ENCODE measurements at regions of chr6 and their contacts with region 1.

Region 1: DNA sequence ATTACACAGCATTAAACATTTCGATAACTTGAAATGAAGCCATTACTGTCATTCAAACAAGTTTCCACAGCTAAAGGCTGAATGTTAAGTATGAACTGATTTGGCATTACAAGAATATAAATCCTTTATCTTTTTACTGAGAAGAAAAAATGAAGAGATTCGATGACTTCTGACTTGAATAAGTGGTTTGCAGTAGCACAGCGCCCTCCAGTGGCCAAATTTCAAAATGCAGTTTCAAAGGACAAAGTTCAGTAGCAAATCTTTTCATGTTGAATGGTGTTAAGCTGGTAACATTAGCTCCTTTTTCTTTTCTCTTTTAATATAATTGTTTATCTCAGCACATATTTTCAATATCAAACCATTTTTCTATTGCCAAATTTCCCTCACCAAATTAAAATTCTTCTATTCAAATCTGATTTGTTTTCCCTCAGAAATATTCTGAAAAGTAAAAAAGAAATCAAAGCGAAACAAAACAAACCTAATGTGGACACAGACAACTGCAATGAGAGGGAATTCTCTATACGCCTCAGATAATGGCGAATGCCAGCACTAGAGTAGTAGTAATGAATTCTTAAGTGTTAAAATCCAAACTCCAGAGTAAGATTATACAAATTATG is 145.7 kb downstream of the BTBD9 start:
- DNase-seq: peak; percentile 81

Region 2: DNA sequence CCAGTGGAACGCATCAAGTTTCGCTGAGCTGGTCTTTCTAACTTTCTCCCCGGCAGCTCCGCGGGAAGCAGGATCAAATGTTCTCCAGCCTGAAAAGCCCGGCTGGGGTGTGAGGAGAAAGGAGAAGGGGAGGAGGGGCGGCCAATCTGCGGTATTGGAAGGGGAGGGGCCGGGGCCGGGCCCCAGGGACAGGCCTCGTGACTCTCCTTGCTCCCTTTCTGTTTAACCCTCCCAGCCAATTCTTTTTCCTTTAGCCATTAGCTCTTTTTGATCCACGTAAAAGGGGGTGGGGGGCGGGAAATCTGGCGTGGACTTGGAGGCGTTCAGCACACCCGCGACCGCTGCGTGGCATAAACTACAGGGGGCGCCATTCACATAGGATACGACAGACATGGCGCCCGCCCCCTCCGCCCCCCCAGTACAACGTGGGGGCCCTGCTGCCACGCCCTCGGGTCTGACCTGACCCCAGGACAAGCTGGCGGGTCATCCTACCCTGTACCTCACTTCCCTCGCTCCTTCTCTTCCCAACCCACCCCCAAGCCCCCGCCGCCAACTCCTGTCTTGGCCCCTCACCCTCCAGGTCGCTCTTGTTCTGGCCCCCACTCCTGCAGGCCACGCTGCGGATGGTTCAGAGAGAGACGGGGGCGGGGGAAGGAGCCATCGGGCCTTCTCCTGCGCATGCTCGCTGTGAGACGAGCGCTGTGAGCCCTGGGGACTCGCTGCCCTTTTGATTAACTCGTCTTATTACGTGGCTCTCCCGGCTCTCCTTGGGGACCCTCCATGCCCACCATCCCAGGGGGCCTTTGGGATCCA is 788.6 kb before region 1 on chr6:
- intact Hi-C with region 1: loop called (anchors 10 kb)
- DNase-seq: peak; percentile 89

Region 3: DNA sequence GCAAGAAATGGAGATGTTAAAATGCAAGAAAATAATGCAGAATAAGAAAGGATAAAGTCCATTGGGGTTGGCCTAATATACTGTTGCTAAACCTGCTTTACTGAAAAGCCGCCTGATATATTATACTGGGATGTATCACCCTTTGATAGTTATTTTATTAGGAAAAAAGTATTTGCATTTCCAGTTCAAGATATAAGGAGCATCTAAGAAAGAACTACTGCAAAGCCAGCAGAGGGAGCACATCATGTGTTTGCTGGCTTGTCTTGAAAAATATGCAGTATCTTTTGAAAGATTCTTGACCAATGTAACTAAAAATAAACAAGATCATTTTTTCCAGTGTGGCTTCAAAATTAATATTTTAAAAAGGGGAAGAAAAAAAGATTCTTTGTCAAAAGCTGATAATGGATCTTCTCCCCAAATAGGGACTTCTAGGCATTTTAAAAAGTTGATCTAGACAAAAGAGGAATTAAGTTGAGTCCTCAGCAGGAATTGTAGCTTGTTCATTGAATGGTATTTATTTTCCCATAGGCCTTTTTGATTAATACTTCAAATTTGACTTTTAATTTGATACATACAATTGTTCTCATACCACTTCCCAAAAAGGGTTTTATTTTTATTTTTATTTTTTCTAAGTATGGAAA is 459.6 kb before region 1 on chr6:
- intact Hi-C with region 1: loop called (anchors 10 kb)
- DNase-seq: no peak

Region 4: GRCh38 chr6:38404900-38405556 is 89.0 kb before region 1 on chr6:
- intact Hi-C with region 1: no loop called
- DNase-seq: no peak

Measured in cardiac septum (tissue), 1 donor.